ENCODE measurements at regions of chr16 and their contacts with region 1.

Region 1: GRCh38 chr16:72072514-72073342 is 9.7 kb downstream of the HPR start:
- DNase-seq: peak; percentile 96
- ATAC-seq: peak; percentile 96
- H3K4me3 ChIP-seq: peak overlapping the region in 1 of 3 experiments; percentile 19; a peak in 1 of 6 replicates
- H3K27ac ChIP-seq: peak overlapping the region; percentile 90
- H3K4me1 ChIP-seq: peaks cover 53% of the 10 kb centered on the region
- H3K27me3 ChIP-seq: no peaks in the 10 kb centered on the region
- CTCF ChIP-seq: no peak
- EP300 ChIP-seq: peak; percentile 25 to 89; a peak in 3 of 4 replicates
- POLR2A ChIP-seq: peak; percentile 53 to 72; a peak in 2 of 4 replicates
- RAD21 ChIP-seq: no peak; the same call in 1 of the 2 replicates

Region 2: GRCh38 chr16:72036098-72036497 is 36.6 kb before region 1 on chr16:
- CTCF ChIA-PET with region 1: no interaction called
- POLR2A ChIA-PET with region 1: no interaction called
- in situ Hi-C with region 1: no loop called
- intact Hi-C with region 1: no loop called
- DNase-seq: no peak
- ATAC-seq: no peak
- H3K4me3 ChIP-seq: no peak overlapping the region
- H3K27ac ChIP-seq: no peak overlapping the region
- H3K4me1 ChIP-seq: 0 out of 2 replicates have a peak, but pooled peaks cover 7% of the 10 kb centered on the region
- H3K27me3 ChIP-seq: no peaks in the 10 kb centered on the region
- CTCF ChIP-seq: no peak
- EP300 ChIP-seq: no peak
- POLR2A ChIP-seq: no peak
- RAD21 ChIP-seq: no peak

Region 3: DNA sequence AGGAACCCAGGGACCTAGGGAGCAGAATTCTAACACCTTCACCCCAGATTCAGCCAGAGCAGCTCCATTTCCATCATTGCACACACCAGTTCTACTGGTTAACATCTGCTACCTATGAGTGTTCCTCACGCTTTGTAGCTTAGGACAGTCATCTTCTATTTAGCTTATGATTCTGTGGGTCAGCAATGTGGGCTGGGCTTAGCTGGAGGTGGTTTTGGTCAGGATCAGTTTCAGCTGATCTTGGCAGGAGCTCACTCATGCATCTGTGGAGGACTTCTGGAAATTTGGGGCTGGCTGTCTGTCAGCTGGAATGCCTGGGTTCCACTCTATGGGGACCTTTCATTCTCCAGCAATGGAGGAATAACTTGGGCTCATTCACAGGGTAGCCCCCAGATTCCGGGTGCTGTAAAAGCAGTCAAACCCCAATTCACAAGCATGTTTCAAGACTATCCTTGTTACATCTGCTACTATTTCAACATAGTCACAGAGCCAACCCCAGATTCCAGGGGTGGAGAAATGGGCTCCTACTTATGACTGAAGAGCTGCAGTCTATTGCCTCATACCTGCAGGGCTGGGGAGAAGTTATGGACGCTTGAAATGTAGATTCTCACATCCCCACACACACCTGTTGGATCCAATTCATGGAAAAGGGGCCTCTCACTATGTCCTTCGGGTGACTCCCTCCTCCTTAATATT is 21.8 kb before region 1 on chr16:
- CTCF ChIA-PET with region 1: no interaction called
- POLR2A ChIA-PET with region 1: interaction called, 13 read pairs
- in situ Hi-C with region 1: no loop called
- intact Hi-C with region 1: no loop called
- DNase-seq: no peak
- ATAC-seq: no peak
- H3K4me3 ChIP-seq: no peak overlapping the region
- H3K27ac ChIP-seq: no peak overlapping the region
- H3K4me1 ChIP-seq: peaks cover 61% of the 10 kb centered on the region
- H3K27me3 ChIP-seq: no peaks in the 10 kb centered on the region
- CTCF ChIP-seq: no peak
- EP300 ChIP-seq: no peak
- POLR2A ChIP-seq: no peak
- RAD21 ChIP-seq: no peak

Region 4: GRCh38 chr16:72085002-72085401 is 12.3 kb after region 1 on chr16:
- CTCF ChIA-PET with region 1: no interaction called
- POLR2A ChIA-PET with region 1: interaction called, 30 read pairs
- in situ Hi-C with region 1: no loop called
- intact Hi-C with region 1: no loop called
- DNase-seq: no peak
- ATAC-seq: no peak
- H3K4me3 ChIP-seq: no peak overlapping the region
- H3K27ac ChIP-seq: no peak overlapping the region
- H3K4me1 ChIP-seq: peaks cover 41% of the 10 kb centered on the region
- H3K27me3 ChIP-seq: no peaks in the 10 kb centered on the region
- CTCF ChIP-seq: no peak
- EP300 ChIP-seq: no peak
- POLR2A ChIP-seq: no peak
- RAD21 ChIP-seq: no peak

Measured in HepG2 (cell line).